PC-9 (cell line): ENCODE measurements at regions of chr12 and their contacts with region 1.

Region 1: DNA sequence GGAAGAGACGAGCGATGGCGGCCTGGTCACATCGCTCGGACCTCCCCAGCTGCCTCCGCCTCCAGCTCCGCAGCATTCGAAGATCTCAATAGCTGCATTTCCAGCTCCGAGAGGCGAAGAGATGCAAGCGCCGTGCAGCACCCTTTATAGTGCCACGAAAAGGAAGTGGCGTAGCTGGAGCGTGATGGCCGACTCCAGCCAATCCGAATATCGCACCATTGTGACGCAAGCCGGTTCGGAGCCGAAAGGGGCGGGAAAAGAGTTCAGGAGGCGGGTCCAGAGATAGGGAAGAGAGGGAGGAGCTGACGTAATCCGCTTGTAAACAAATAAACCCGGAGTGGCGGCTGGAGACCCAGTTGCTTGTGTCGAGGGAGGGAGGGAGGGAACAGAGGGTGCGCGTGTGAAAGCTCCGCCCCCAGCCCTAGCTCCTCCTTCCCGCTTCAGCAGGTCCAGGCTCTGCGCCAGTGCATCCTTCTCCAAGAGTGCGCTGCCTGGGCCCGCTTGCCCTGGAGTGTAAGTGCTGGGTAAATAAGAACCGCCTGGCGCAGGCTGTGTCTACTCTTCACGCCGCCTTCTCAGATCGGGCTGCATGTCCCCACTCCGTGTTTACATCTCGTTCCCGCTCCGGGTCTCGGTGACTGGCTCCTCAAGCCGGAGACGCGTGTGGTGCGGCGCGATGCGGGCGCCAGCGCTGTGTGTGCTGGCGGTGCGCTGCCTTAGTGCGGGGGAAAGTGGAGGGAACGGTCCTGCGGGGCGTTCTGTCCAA is at the start of gene BTG1:
- DNase-seq: peak; percentile 98
- H3K4me3 ChIP-seq: peak within 1 kb of the TSS; percentile 86
- H3K27ac ChIP-seq: peak within 1 kb of the TSS; percentile 96
- H3K4me1 ChIP-seq: peaks cover 42% of the 10 kb centered on the region
- H3K27me3 ChIP-seq: no peaks in the 10 kb centered on the region
- CTCF ChIP-seq: no peak
- total RNA-seq, gene BTG1: 72.4 and 111 TPM in 2 replicates

Region 2: GRCh38 chr12:91577586-91578539 is 568.1 kb before region 1 on chr12:
- CTCF ChIA-PET with region 1: no interaction called
- POLR2A ChIA-PET with region 1: interaction called, 4 read pairs
- intact Hi-C with region 1: loop called (anchors 10 kb)
- DNase-seq: no peak
- H3K4me3 ChIP-seq: peak overlapping the region; percentile 49; the same call in 1 of the 2 replicates
- H3K27ac ChIP-seq: no peak overlapping the region
- H3K4me1 ChIP-seq: 0 out of 2 replicates have a peak, but pooled peaks cover 4% of the 10 kb centered on the region
- H3K27me3 ChIP-seq: no peaks in the 10 kb centered on the region
- CTCF ChIP-seq: peak; percentile 81

Region 3: GRCh38 chr12:91811481-91812287 is 334.2 kb before region 1 on chr12:
- CTCF ChIA-PET with region 1: interaction called, 4 read pairs
- POLR2A ChIA-PET with region 1: interaction called, 4 read pairs
- intact Hi-C with region 1: loop called (anchors 2 kb)
- DNase-seq: peak in 1 of 2 experiments; percentile 48
- H3K4me3 ChIP-seq: no peak overlapping the region
- H3K27ac ChIP-seq: no peak overlapping the region
- H3K4me1 ChIP-seq: no peaks in the 10 kb centered on the region
- H3K27me3 ChIP-seq: no peaks in the 10 kb centered on the region
- CTCF ChIP-seq: peak; percentile 83

Region 4: DNA sequence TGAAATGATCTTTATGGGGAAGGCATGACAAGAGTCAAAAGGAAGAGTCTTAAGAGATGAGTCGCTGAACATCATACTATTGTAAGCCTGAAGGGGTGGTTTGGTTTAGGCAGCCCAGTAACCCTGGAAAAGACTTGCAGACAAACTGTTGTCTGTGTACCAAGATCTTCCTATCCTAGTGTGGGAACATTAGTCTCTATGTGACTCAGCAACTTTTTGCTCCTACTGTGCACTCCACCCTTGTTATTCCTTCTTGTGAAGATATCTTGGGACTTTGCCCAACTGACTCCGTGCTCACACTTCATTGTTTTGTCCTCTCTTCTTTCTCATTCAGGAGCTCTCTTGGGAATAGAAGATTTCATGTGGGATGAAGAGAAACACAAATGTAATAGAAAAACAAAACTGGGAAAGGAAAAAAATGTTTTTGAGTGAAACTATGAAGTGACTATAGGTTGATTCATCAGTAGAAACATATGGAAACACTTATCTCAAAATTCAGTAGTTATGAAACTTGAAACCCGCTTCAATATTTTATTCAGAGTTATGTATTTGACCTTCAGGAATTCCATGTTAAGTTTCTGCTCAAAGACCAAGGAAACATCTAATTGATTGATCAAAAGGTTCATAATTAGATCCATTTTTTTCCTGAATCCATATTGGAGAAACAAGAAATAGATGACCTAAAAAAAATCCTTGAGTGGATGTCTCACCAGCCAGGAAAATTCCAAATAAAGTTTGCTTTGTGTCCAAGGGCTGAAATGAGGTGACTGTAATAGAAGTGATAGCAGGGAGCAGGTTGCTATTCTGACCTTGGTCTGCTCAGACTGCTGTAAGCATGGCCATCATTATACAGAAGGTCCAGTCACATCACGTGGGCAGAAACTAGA is 67.5 kb before region 1 on chr12:
- CTCF ChIA-PET with region 1: no interaction called
- POLR2A ChIA-PET with region 1: interaction called, 4 read pairs
- intact Hi-C with region 1: loop called (anchors 1 kb)
- DNase-seq: peak; percentile 28 to 69
- H3K4me3 ChIP-seq: no peak overlapping the region
- H3K27ac ChIP-seq: peak overlapping the region; percentile 96
- H3K4me1 ChIP-seq: peaks cover 42% of the 10 kb centered on the region
- H3K27me3 ChIP-seq: no peaks in the 10 kb centered on the region
- CTCF ChIP-seq: no peak

Region 5: DNA sequence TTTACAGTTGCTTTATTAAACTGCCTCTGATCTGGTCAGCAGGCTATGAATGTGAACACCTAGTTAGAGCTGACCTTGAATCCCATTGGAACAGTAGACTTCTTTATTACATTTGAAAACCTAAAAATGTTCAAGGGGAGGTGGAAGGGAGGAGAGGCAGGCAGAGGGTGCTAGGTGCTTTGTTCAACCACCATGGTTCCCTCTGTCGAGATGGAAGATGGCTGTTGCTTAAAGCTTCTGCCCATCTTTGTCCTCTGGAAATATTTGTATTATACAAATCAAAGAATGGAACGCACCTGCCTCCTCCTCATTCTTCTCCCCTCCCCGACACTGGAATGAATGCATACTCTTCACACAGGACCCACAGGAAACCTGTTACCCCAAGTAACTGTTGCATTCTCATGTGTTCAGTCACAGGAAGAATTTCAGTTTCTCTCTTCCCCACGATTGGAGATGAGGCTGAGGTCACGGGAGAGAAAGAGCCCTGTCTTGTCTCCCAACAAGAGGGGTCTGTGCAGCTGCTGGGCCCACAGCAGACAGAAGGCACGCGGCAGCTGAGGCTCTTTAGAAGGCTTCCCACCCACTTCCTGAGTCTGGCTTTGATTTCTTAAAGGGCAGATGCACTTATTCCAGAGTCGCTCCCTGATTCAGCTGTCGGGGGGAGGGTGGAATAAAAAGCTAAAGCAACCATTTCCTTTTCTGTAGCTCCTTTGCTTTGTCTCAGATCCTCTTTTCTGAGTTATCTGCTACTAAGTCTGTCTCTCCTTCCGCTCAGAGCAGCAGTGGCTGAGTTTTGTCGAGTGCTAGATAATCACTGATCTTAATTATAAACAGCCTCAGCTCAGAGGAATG is 217.6 kb after region 1 on chr12:
- CTCF ChIA-PET with region 1: no interaction called
- POLR2A ChIA-PET with region 1: interaction called, 19 read pairs
- intact Hi-C with region 1: loop called (anchors 10 kb)
- DNase-seq: no peak
- H3K4me3 ChIP-seq: no peak overlapping the region
- H3K27ac ChIP-seq: no peak overlapping the region
- H3K4me1 ChIP-seq: peaks cover 13% of the 10 kb centered on the region
- H3K27me3 ChIP-seq: no peaks in the 10 kb centered on the region
- CTCF ChIP-seq: no peak

Region 6: DNA sequence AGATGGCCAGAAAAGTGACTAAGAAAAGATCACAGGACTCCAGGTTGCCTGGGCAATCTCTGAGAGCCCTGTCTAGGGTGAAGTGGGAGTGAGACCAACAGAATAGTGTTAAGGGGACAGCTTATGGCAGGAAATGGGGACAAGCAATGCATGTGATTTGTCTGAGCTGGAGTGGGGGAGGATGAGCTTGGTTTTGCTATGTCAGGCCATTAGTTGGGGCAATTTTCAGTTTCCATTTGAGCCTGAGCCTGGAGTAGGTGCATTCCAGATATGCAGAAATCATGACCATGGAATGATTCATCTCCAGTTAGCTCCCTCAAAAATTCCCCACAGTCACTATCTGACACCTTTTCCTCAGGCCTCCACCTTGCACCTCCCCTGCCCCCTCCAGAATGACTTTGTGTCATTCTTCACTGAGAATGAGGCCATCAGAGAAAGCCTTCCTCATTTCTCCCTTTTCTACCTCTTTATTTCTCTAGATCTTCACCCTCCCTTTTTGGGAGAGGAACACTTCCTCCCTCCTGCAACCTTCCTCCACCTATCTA is 406.0 kb after region 1 on chr12:
- CTCF ChIA-PET with region 1: no interaction called
- POLR2A ChIA-PET with region 1: interaction called, 14 read pairs
- intact Hi-C with region 1: loop called (anchors 5 kb)
- DNase-seq: peak; percentile 55 to 75
- H3K4me3 ChIP-seq: no peak overlapping the region
- H3K27ac ChIP-seq: peak overlapping the region; percentile 73
- H3K4me1 ChIP-seq: peaks cover 19% of the 10 kb centered on the region
- H3K27me3 ChIP-seq: no peaks in the 10 kb centered on the region
- CTCF ChIP-seq: no peak